ENCODE measurements at regions of chr12 and their contacts with region 1.

Region 1: GRCh38 chr12:128737292-128737966 is 86.3 kb downstream of the SLC15A4 start:
- DNase-seq: no peak
- H3K4me3 ChIP-seq: no peak overlapping the region
- H3K27ac ChIP-seq: no peak overlapping the region
- H3K4me1 ChIP-seq: no peaks in the 10 kb centered on the region
- H3K27me3 ChIP-seq: no peaks in the 10 kb centered on the region
- CTCF ChIP-seq: no peak
- POLR2A ChIP-seq: no peak

Region 2: GRCh38 chr12:127716166-127716565 is 1021.3 kb before region 1 on chr12:
- intact Hi-C with region 1: loop called (anchors 5 kb)
- DNase-seq: no peak
- H3K4me3 ChIP-seq: no peak overlapping the region
- H3K27ac ChIP-seq: no peak overlapping the region
- H3K4me1 ChIP-seq: no peaks in the 10 kb centered on the region
- H3K27me3 ChIP-seq: no peaks in the 10 kb centered on the region
- CTCF ChIP-seq: no peak
- POLR2A ChIP-seq: no peak

Region 3: DNA sequence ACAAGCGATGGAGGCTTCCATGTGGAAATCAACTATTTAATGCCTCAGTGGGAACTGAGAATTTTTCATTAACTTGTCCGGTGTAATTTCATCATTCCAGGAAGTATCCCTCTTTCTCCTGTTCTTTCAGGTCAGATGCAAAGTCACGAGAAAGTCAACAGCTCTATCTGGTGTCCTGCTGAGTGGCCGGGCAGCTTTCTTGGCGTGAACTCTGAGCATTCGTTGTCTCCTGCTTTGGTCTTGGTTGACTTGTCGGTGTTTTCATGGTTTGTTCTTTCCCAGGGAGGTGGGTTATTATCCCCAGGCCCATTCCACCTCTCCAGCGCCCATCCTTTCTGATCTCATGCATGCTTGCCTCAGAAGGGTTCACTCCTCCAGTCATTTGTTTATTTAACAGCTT is 265.0 kb after region 1 on chr12:
- intact Hi-C with region 1: no loop called
- DNase-seq: no peak
- H3K4me3 ChIP-seq: no peak overlapping the region
- H3K27ac ChIP-seq: no peak overlapping the region
- H3K4me1 ChIP-seq: no peaks in the 10 kb centered on the region
- H3K27me3 ChIP-seq: no peaks in the 10 kb centered on the region
- CTCF ChIP-seq: no peak
- POLR2A ChIP-seq: no peak

Region 4: DNA sequence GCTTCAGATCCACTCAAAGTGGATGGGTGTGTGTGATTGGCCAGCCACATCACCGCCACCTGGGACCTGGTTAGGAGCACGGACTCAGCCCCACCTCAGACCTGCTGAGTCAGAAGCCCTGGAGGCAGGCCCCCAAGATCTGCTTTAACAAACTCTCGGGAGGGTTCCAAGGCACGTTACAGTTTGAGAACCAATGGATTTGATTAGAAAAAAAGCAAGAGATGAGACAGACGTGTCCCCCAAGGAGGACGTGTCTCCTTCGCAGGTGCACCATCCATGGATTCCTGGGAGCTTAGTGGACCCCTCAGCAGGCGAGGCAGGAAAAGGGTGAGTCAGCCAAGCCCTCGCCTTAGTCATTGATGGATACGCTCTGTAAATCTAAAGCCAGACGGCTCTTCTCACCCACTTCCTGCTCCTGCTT is 1449.3 kb after region 1 on chr12:
- intact Hi-C with region 1: loop called (anchors 5 kb)
- DNase-seq: no peak
- H3K4me3 ChIP-seq: no peak overlapping the region
- H3K27ac ChIP-seq: no peak overlapping the region
- H3K4me1 ChIP-seq: no peaks in the 10 kb centered on the region
- H3K27me3 ChIP-seq: no peaks in the 10 kb centered on the region
- CTCF ChIP-seq: no peak
- POLR2A ChIP-seq: no peak

Measured in breast epithelium (tissue), 4 donors.